Naive thymus-derived CD4-positive, alpha-beta T cell (primary cell): ENCODE measurements at regions of chr4 and their contacts with region 1.

Region 1: DNA sequence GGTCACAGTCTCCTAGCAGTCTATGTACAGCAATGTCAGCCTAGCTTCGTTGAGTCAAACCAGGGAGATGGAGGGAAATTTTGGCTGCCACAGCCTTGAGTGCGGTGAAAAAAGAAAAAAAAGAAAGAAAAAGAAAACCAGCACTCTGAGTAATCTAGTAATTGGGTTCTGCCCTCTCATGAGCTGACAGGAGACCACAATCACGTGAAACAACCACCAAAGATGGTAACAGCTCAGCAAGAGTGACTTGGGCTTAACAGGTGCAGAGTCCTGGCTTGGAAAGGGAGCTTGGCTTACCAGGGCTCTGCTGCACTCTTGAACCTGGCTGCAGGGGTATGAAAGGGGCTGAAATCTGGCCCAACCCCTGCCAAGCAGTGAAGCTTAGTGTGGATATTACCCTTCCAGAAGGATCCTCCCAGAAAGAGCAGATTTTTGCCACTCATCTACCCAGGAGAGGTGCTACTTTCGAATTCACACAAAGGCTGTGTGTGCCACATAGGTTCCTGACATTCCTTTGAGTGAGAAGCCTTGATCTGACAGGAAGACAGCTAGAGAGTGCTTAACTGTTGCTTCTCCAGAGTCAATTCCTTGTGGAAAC is 350.3 kb downstream of the PTTG2 start:
- DNase-seq: peak in 8 of 9 donors; percentile 70 to 84 (median 79)
- ATAC-seq: peak; percentile 96
- H3K4me3 ChIP-seq: peak overlapping the region; percentile 12
- H3K4me3 Mint-ChIP-seq: peak overlapping the region; percentile 37 to 80 (median 70)
- H3K27ac ChIP-seq: peak overlapping the region; percentile 44
- H3K27ac Mint-ChIP-seq: peak overlapping the region; percentile 65 to 96 (median 85)
- H3K4me1 ChIP-seq: peaks cover 29 to 34% of the 10 kb centered on the region in 2 donors
- H3K4me1 Mint-ChIP-seq: peaks cover 24 to 70% (median 60%) of the 10 kb centered on the region in 7 donors
- H3K27me3 ChIP-seq: no peaks in the 10 kb centered on the region
- H3K27me3 Mint-ChIP-seq: peaks cover 0 to 45% (median 0%) of the 10 kb centered on the region in 5 donors

Region 2: DNA sequence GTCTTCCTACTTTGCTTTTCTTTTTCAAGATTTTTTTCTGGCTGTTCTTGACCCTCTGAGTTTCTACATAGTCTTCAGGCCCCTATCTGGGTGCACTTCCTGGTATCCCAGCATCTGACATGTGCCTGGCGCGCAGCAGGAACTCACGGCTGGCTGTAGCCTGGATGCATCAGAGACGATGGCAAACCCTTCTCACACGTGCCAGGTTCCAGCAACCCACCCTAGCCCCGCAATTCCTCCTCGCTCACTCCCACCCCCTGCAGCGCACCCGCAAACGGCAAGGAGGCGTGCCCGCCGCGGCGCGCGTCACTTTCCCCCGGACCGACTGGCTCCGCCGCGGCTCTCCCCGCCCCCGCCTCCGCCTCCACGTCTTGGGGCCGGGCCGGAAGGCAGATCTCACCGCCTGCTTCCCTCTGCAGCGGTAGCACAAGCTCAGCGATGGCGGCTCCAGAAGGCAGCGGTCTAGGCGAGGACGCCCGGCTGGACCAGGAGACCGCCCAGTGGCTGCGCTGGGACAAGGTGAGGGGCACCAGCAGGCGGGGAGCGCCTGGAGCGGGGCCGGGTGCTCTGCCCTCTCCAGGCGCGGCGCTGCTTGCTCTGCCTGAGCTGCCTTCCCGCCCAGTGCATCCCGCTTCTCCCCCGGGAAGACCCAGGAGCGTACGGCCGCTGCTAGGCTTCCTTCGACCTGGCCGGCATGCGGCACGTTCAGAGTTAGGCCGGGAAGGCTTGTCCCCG is 484.1 kb before region 1 on chr4 and contains the start of gene PGM2:
- CTCF ChIA-PET with region 1: no interaction called
- POLR2A ChIA-PET with region 1: no interaction called
- intact Hi-C with region 1: loop called in 1 of 2 experiments (anchors 5 kb)
- DNase-seq: peak; percentile 84 to 94 (median 90)
- ATAC-seq: peak; percentile 99
- H3K4me3 ChIP-seq: peak within 1 kb of the TSS; percentile 79
- H3K4me3 Mint-ChIP-seq: peak within 1 kb of the TSS; percentile 93 to 100 (median 98)
- H3K27ac ChIP-seq: peak within 1 kb of the TSS; percentile 80
- H3K27ac Mint-ChIP-seq: peak within 1 kb of the TSS; percentile 92 to 99 (median 96)
- H3K4me1 ChIP-seq: peaks cover 7 to 11% of the 10 kb centered on the region in 2 donors
- H3K4me1 Mint-ChIP-seq: peaks cover 34 to 70% (median 55%) of the 10 kb centered on the region in 7 donors
- H3K27me3 ChIP-seq: no peaks in the 10 kb centered on the region
- H3K27me3 Mint-ChIP-seq: peaks cover 0 to 5% (median 0%) of the 10 kb centered on the region in 5 donors
- total RNA-seq, gene PGM2: 14.4 to 35.2 (median 18.7) TPM

Region 3: DNA sequence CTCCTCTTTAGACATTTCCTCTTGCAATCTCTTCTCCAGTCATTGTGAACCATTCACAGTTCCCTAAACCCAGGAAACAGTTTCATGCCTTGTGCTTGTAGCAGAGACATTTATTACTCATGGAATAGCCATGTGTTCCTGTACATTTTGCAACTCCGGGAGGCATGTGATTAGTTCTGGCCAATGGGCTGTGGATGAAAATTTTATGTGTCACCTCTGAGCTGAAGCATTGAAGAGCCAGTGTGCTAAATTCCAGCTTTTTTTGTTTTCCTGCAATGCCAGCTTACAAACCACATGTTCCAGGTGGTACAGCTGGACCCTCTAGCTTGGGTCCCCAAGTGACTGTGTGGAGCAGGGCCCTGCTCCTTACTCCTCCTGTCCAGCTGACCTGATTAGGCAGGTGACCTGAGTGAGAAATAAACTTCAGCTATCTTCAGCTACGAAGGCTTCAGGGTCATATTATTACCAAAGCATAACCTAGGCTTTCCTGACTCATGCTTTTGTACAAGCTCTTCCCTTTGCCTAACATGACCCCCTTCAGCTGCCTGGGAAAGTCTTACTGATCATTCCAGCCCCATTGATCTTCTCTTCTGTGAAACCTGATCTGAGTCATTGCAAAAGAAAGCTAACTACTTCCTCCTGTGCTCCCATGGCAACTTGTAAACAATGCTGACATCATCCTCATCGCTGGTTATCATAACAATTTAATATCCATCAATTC is 149.9 kb before region 1 on chr4:
- CTCF ChIA-PET with region 1: no interaction called
- POLR2A ChIA-PET with region 1: no interaction called
- intact Hi-C with region 1: loop called in 1 of 2 experiments (anchors 1 kb)
- DNase-seq: peak in 8 of 9 donors; percentile 14 to 71 (median 50)
- ATAC-seq: peak; percentile 85
- H3K4me3 ChIP-seq: no peak overlapping the region
- H3K4me3 Mint-ChIP-seq: peak overlapping the region in 2 of 10 donors; percentile 10 to 26
- H3K27ac ChIP-seq: no peak overlapping the region
- H3K27ac Mint-ChIP-seq: peak overlapping the region in 7 of 9 donors; percentile 35 to 81 (median 80)
- H3K4me1 ChIP-seq: peaks cover 10 to 19% of the 10 kb centered on the region in 2 donors
- H3K4me1 Mint-ChIP-seq: peaks cover 17 to 70% (median 35%) of the 10 kb centered on the region in 7 donors
- H3K27me3 ChIP-seq: no peaks in the 10 kb centered on the region
- H3K27me3 Mint-ChIP-seq: no peaks in the 10 kb centered on the region

Region 4: DNA sequence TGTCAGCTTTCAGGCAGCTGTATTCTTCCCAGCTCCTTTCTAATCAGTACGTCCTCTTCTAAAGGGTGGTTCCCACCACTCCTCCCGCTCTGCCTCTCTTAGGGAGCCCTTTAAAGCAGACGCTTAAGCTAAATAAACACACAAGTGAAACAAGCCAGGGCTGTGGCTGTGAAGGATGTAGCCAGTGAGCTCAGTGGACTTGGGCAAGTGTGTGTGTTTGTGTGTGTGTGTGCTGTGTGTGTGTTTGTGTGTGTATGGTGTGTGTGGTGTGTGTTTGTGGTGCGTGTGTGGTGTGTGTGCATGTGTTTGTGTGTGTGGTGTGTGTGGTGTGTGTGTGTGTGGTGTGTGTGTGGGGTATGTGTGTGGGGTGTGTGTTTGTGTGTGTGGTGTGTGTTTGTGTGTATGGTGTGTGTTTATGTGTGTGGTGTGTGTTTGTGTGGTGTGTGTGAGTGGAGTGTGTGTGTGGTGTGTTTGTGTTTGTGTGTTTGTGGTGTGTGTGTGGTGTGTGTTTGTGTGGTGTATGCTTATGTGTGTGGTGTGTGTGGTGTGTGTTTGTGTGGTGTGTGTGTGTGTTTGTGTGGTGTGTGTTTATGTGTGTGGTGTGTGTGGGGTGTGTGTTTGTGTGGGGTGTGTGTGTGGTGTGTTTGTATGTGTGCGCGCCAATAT is 67.0 kb before region 1 on chr4:
- CTCF ChIA-PET with region 1: no interaction called
- POLR2A ChIA-PET with region 1: no interaction called
- intact Hi-C with region 1: loop called in 1 of 2 experiments (anchors 5 kb)
- DNase-seq: no peak
- ATAC-seq: peak; percentile 31
- H3K4me3 ChIP-seq: no peak overlapping the region
- H3K4me3 Mint-ChIP-seq: peak overlapping the region in 9 of 10 donors; percentile 18 to 78 (median 64)
- H3K27ac ChIP-seq: no peak overlapping the region
- H3K27ac Mint-ChIP-seq: peak overlapping the region in 8 of 9 donors; percentile 63 to 88 (median 84)
- H3K4me1 ChIP-seq: peaks cover 0 to 16% of the 10 kb centered on the region in 2 donors
- H3K4me1 Mint-ChIP-seq: peaks cover 7 to 31% (median 23%) of the 10 kb centered on the region in 7 donors
- H3K27me3 ChIP-seq: no peaks in the 10 kb centered on the region
- H3K27me3 Mint-ChIP-seq: no peaks in the 10 kb centered on the region

Region 5: DNA sequence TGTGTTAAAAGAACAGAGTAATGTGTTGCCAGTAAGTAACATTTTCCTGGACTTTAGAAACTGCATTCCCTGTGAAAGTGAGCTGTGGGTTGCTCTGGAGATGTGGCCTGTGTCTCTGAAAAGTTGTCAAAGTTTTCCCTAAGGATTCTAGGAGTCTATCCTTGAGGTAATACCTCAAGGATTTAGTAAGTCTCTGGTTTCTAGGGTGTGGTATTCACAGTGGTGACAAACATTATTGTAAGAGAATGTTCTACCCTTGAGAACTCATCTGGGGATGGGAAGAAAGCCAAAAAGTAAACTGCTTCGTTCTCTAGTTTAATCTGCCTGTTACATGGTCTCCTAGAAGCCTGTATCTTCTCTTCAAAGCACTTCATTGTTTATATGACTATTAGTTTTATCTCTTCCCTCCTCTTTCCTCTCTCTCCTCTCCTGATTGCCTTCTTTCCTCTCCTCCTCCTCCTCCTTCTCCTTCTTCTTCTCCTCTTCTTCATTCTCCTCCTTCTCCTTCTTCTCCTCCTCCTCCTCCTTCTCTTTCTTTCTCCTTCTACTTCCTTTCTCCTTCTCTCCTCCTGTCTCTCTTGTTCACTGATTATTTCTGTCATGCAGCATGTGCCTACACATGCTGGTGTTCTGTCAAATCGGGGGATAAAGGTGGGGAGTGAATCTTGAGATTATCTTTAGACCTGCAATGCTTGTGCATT is 29.0 kb before region 1 on chr4:
- CTCF ChIA-PET with region 1: no interaction called
- POLR2A ChIA-PET with region 1: no interaction called
- intact Hi-C with region 1: no loop called
- DNase-seq: no peak
- ATAC-seq: no peak
- H3K4me3 ChIP-seq: no peak overlapping the region
- H3K4me3 Mint-ChIP-seq: no peak overlapping the region
- H3K27ac ChIP-seq: no peak overlapping the region
- H3K27ac Mint-ChIP-seq: peak overlapping the region in 3 of 9 donors; percentile 0 to 41 (median 28)
- H3K4me1 ChIP-seq: no peaks in the 10 kb centered on the region
- H3K4me1 Mint-ChIP-seq: peaks cover 0 to 16% (median 5%) of the 10 kb centered on the region in 7 donors
- H3K27me3 ChIP-seq: no peaks in the 10 kb centered on the region
- H3K27me3 Mint-ChIP-seq: peaks cover 0 to 3% (median 0%) of the 10 kb centered on the region in 5 donors

Region 6: DNA sequence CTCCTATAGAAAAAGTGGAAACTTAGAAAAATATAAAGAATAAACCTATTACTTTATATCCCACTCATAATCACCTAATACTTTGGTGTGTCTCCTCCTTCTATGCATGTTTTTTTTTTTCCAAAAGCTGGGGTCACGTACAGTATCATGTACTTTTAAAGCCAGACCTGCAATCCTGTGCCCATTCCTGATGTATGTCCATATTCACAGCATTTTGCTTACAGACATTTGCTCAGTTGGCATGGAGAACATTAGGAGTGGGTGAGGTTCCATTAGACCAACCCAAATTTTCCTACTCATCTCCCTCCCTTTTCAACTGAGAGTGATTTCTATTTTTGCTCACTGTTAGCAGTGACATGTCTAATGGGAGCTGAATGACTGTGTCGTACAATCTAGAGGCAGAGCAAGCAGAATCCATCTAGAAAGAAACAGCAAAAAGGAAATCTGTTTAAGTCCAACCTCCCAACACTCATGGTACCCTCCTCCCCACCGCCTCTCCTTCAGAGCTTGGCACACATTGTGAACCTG is 157.9 kb after region 1 on chr4:
- CTCF ChIA-PET with region 1: no interaction called
- POLR2A ChIA-PET with region 1: no interaction called
- intact Hi-C with region 1: no loop called
- DNase-seq: no peak
- ATAC-seq: no peak
- H3K4me3 ChIP-seq: no peak overlapping the region
- H3K4me3 Mint-ChIP-seq: no peak overlapping the region
- H3K27ac ChIP-seq: no peak overlapping the region
- H3K27ac Mint-ChIP-seq: no peak overlapping the region
- H3K4me1 ChIP-seq: peaks cover 0 to 9% of the 10 kb centered on the region in 2 donors
- H3K4me1 Mint-ChIP-seq: peaks cover 5 to 14% (median 11%) of the 10 kb centered on the region in 7 donors
- H3K27me3 ChIP-seq: no peaks in the 10 kb centered on the region
- H3K27me3 Mint-ChIP-seq: peaks cover 0 to 7% (median 0%) of the 10 kb centered on the region in 5 donors

Region 7: GRCh38 chr4:38523524-38524448 is 213.2 kb after region 1 on chr4:
- CTCF ChIA-PET with region 1: no interaction called
- POLR2A ChIA-PET with region 1: no interaction called
- intact Hi-C with region 1: loop called in 1 of 2 experiments (anchors 1 kb)
- DNase-seq: peak in 1 of 9 donors; percentile 38
- ATAC-seq: peak; percentile 84
- H3K4me3 ChIP-seq: no peak overlapping the region
- H3K4me3 Mint-ChIP-seq: peak overlapping the region in 3 of 10 donors; percentile 20 to 49 (median 38)
- H3K27ac ChIP-seq: no peak overlapping the region
- H3K27ac Mint-ChIP-seq: peak overlapping the region in 4 of 9 donors; percentile 7 to 65 (median 14)
- H3K4me1 ChIP-seq: peaks cover under 1 to 2% of the 10 kb centered on the region in 2 donors
- H3K4me1 Mint-ChIP-seq: peaks cover 22 to 51% (median 33%) of the 10 kb centered on the region in 7 donors
- H3K27me3 ChIP-seq: no peaks in the 10 kb centered on the region
- H3K27me3 Mint-ChIP-seq: peaks cover 0 to 44% (median 0%) of the 10 kb centered on the region in 5 donors